Caco-2 (cell line): ENCODE measurements at regions of chr6 and their contacts with region 1.

Region 1: GRCh38 chr6:148559848-148560433 is 186.9 kb upstream of the UST start:
- DNase-seq: peak; percentile 57 to 80
- H3K4me3 ChIP-seq: peak overlapping the region; percentile 49
- H3K4me3 Mint-ChIP-seq: peak overlapping the region; percentile 55
- H3K27ac Mint-ChIP-seq: no peak overlapping the region
- H3K4me1 ChIP-seq: no peaks in the 10 kb centered on the region
- H3K4me1 Mint-ChIP-seq: no peaks in the 10 kb centered on the region
- H3K27me3 ChIP-seq: peaks cover 1% of the 10 kb centered on the region; the same call in 1 of the 2 replicates
- H3K27me3 Mint-ChIP-seq: peaks cover 11% of the 10 kb centered on the region
- CTCF ChIP-seq: peak; percentile 83 to 94

Region 2: GRCh38 chr6:148608199-148608951 is 48.4 kb after region 1 on chr6:
- CTCF ChIA-PET with region 1: no interaction called
- POLR2A ChIA-PET with region 1: no interaction called
- intact Hi-C with region 1: loop called (anchors 1 kb)
- DNase-seq: peak in 1 of 2 experiments; percentile 22
- H3K4me3 ChIP-seq: no peak overlapping the region
- H3K4me3 Mint-ChIP-seq: no peak overlapping the region
- H3K27ac Mint-ChIP-seq: no peak overlapping the region
- H3K4me1 ChIP-seq: no peaks in the 10 kb centered on the region
- H3K4me1 Mint-ChIP-seq: no peaks in the 10 kb centered on the region
- H3K27me3 ChIP-seq: no peaks in the 10 kb centered on the region
- H3K27me3 Mint-ChIP-seq: peaks cover 12% of the 10 kb centered on the region
- CTCF ChIP-seq: peak; percentile 60 to 76

Region 3: DNA sequence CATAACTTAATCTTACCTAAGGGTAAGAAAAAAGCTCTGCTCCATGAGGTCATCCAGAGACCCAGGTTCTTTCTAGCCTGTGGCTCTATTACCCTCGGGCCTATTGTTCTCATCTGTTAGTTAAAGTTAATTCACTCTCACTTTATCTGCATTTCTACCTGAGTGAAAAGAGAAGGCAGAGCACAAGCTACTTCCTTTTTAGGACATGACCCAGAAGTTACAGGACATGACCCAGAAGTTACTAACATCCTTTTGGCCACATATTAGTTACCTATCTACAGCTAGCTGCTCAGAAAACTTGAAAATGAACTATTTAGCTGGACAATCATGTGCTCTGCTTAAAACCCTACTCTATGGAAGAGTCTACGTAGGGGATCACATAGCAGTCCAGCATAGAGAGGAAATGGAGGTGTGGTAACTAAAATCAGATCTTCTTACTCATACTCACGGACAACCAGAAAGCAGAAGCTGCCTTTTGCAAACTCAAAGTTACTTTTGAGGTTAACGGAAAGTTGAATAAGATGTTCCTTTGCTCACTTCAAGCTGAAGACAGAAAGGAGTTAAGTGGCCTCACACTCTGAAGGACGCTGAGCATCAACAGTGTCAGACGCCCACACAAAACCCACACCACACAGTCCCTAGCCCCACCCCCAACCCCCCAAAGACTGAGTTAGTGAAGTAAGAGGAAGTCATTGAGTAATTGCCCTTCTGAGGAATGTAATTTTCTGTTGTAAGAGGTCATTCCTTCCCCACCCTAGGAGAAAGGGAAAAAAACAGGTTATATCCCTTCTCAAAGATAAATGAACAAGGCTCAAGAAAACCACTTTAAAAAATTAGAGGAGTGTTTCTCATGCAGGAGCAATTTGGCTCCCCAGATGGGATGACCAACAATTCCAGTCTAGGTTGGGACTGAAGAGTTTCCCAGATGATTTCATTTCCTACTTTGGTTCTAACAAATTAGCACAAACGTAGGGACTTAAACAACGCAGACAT is 711.7 kb after region 1 on chr6:
- CTCF ChIA-PET with region 1: no interaction called
- POLR2A ChIA-PET with region 1: no interaction called
- intact Hi-C with region 1: no loop called
- DNase-seq: no peak
- H3K4me3 ChIP-seq: no peak overlapping the region
- H3K4me3 Mint-ChIP-seq: no peak overlapping the region
- H3K27ac Mint-ChIP-seq: no peak overlapping the region
- H3K4me1 ChIP-seq: no peaks in the 10 kb centered on the region
- H3K4me1 Mint-ChIP-seq: no peaks in the 10 kb centered on the region
- H3K27me3 ChIP-seq: no peaks in the 10 kb centered on the region
- H3K27me3 Mint-ChIP-seq: peaks cover 5% of the 10 kb centered on the region
- CTCF ChIP-seq: no peak